ENCODE measurements at regions of chr22 and their contacts with region 1.

Region 1: DNA sequence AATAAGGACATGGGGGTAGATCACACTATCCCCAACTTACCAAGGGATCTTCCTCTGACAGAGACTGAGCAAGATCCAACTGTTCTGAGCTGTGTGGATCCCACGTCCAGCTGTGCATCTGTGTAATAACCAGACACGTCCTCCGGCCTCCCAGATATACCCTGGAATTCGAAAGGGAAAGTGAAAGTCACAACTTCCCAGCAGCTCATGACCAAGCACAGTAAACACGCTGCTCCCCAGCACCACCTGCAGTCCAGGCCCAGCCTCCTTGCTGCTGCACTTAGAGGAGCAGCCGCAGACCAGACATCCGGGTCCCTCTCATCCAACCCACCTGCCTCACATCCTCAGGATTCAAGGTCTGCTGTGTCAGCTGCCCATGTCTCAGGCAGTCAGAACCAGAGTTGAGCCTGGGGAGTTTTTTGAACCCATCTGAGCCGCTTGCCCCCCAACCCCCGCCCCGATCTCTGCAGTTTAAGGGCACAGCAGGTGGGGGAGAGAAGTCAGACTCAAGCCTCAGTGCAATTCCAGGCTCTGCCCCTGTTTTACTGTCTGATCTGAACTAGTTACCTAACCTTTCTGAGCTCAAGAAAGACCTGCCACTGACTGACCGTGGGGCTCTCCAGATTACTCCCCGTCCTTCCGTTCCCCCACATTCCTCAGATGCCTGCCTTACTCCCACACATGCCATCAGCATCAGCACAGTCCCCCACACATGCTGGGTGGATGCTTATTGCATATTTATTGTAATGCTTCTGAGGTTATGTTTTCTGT is at the start of gene APOL2:
- DNase-seq: peak; percentile 93
- ATAC-seq: peak; percentile 96
- H3K4me3 Mint-ChIP-seq: peak within 1 kb of the TSS; percentile 98
- H3K27ac Mint-ChIP-seq: peak within 1 kb of the TSS; percentile 99
- H3K4me1 Mint-ChIP-seq: peaks cover 42% of the 10 kb centered on the region
- H3K27me3 Mint-ChIP-seq: no peaks in the 10 kb centered on the region
- total RNA-seq, gene APOL2: 64.5 TPM

Region 2: DNA sequence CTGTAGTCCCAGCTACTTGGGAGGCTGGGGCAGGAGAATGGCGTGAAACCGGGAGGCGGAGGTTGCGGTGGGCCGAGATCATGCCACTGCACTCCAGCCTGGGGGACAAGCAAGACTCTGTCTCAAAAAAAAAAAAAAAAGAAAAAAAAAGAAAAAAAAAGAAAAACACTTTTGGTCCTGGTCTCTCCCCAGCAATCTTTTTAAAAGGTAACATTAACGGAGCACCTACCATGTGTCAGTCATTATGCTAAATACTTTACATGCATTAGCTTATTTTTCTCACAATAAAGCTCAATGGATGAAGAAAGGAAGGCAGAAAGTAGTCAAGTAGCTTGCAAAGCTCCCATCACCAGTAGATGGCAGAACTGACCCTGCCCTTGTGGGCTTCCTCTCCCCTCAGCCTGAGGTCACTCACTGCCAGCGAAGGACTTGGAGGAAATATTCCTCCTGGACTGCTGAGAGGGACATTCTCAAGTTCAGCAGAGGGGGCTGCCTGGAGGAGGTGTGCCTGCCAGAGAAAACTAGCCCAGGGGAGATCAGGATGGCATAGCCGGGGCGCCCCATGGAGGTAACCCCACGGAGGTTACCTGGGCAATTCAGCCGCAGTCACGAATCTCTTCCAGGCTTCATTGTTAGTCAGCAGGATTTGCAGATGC is 94.6 kb before region 1 on chr22:
- CTCF ChIA-PET with region 1: no interaction called
- POLR2A ChIA-PET with region 1: no interaction called
- intact Hi-C with region 1: loop called in 1 of 2 experiments (anchors 5 kb)
- DNase-seq: peak; percentile 57
- ATAC-seq: peak; percentile 76
- H3K4me3 Mint-ChIP-seq: no peak overlapping the region
- H3K27ac Mint-ChIP-seq: no peak overlapping the region
- H3K4me1 Mint-ChIP-seq: peaks cover 13% of the 10 kb centered on the region
- H3K27me3 Mint-ChIP-seq: no peaks in the 10 kb centered on the region

Region 3: GRCh38 chr22:36180038-36180880 is 59.3 kb before region 1 on chr22:
- CTCF ChIA-PET with region 1: interaction called, 11 read pairs
- POLR2A ChIA-PET with region 1: no interaction called
- intact Hi-C with region 1: no loop called
- DNase-seq: peak; percentile 92
- ATAC-seq: peak; percentile 99
- H3K4me3 Mint-ChIP-seq: no peak overlapping the region
- H3K27ac Mint-ChIP-seq: no peak overlapping the region
- H3K4me1 Mint-ChIP-seq: peaks cover 10% of the 10 kb centered on the region
- H3K27me3 Mint-ChIP-seq: no peaks in the 10 kb centered on the region

Region 4: DNA sequence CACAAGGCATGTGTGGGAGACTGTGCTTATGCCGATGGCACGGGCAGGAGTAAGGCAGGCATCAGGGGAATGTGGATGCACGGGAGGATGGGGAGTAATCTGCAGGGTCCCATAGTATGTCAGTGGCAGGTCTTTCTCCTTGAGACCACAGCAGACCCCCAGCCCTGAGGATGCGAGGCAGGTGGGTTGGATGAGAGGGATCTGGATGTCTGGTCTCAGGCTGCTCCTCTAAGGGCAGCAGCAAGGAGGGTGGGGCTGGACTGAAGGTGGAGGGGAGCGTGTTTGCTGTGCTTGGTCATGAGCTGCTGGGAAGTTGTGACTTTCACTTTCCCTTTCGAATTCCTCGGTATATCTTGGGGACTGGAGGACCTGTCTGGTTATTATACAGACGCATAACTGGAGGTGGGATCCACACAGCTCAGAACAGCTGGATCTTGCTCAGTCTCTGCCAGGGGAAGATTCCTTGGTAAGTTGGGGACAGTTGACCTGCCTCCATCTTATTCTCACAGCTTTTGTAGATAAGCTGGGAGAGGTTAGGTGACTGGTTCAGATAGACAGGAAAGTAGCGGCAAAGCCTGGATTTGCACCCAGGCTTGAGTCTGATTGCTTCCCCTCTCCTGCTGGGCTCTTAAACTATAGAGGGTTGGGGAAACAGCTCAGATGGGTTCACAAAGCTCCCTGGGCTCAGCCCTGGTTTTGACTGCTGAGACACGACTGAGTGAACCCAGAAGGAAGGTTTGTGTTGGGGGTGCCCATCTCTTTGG is 13.3 kb after region 1 on chr22 and contains the start of gene APOL1:
- CTCF ChIA-PET with region 1: interaction called, 46 read pairs
- POLR2A ChIA-PET with region 1: interaction called, 6 read pairs
- intact Hi-C with region 1: loop called (anchors 1 kb)
- DNase-seq: peak; percentile 71
- ATAC-seq: peak; percentile 87
- H3K4me3 Mint-ChIP-seq: peak within 1 kb of the TSS; percentile 92
- H3K27ac Mint-ChIP-seq: peak within 1 kb of the TSS; percentile 91
- H3K4me1 Mint-ChIP-seq: peaks cover 56% of the 10 kb centered on the region
- H3K27me3 Mint-ChIP-seq: no peaks in the 10 kb centered on the region
- total RNA-seq, gene APOL1: 32.0 to 37.2 TPM

Region 5: GRCh38 chr22:36286471-36287224 is 47.1 kb after region 1 on chr22:
- CTCF ChIA-PET with region 1: interaction called, 10 read pairs
- POLR2A ChIA-PET with region 1: no interaction called
- intact Hi-C with region 1: no loop called
- DNase-seq: peak; percentile 83
- ATAC-seq: peak; percentile 89
- H3K4me3 Mint-ChIP-seq: no peak overlapping the region
- H3K27ac Mint-ChIP-seq: peak overlapping the region; percentile 67
- H3K4me1 Mint-ChIP-seq: peaks cover 18% of the 10 kb centered on the region
- H3K27me3 Mint-ChIP-seq: no peaks in the 10 kb centered on the region